CD14-positive monocyte (primary cell): ENCODE measurements at regions of chr12 and their contacts with region 1.

Region 1: DNA sequence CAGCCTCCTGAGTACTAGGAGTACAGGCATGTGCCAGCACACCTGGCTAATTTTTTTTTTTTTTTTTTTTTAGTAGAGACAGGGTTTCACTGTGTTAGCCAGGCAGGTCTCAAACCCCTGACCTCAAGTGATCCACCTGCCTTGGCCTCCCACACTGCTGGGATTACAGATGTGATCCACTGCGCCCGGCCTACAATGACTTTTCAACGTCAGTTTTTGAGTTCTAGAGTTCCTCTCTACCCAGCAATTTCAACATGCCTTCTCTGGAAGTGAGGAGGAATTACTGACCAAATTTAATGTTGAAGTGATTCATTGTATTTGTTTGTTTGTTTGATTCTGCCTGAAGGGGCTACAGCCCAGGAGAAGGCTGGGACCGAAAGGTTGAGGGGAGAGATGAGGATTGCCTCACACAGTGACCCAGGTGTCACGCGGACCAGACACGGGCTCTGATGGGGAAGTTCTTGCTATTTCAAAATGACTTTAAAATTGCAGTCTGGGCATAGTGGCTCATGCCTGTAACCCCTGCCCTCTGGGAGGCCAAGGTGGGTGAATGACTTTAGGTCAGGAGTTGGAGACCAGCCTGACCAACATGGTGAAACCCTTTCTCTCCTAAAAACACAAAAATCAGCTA is 8.6 kb upstream of the DENR start:
- DNase-seq: peak; percentile 92 to 95 (median 94)
- H3K4me3 ChIP-seq: no peak overlapping the region
- H3K4me3 Mint-ChIP-seq: peak overlapping the region in 1 of 2 donors; percentile 56
- H3K27ac ChIP-seq: peak overlapping the region; percentile 73 to 79
- H3K27ac Mint-ChIP-seq: peak overlapping the region; percentile 90 to 94 (median 92)
- H3K4me1 ChIP-seq: peaks cover 44 to 45% of the 10 kb centered on the region in 2 donors
- H3K4me1 Mint-ChIP-seq: peaks cover 28% of the 10 kb centered on the region
- H3K27me3 ChIP-seq: no peaks in the 10 kb centered on the region
- H3K27me3 Mint-ChIP-seq: peaks cover 0 to 2% (median 0%) of the 10 kb centered on the region in 3 donors
- CTCF ChIP-seq: no peak

Region 2: DNA sequence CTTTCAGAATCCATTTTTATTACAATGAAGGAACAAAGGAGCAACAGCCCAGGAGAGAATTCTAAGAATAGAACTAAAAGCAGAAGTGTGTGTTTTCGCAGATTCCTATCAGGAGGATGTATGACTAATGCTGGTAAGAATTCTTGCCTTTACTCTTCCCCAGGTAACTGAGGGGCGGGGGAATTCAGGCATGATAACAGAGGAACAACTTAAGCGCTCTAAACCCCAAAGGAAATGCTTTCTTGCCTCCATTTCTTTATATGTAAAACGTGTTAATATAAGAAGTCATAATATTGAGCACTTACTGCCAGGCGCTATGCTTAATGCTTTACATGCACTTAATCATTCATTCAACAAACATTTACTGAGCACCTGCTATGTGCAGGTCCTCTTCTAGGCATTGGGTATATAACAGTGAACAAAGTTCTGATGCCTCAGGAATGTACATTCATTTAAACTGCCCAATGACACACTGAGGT is 17.9 kb before region 1 on chr12:
- intact Hi-C with region 1: loop called in 1 of 2 experiments (anchors 2 kb)
- DNase-seq: peak; percentile 56 to 89 (median 87)
- H3K4me3 ChIP-seq: peak overlapping the region in 2 of 3 experiments; percentile 10 to 60
- H3K4me3 Mint-ChIP-seq: peak overlapping the region; percentile 54 to 85
- H3K27ac ChIP-seq: peak overlapping the region in 1 of 2 donors; percentile 79
- H3K27ac Mint-ChIP-seq: peak overlapping the region; percentile 89 to 97 (median 92)
- H3K4me1 ChIP-seq: peaks cover 43 to 49% of the 10 kb centered on the region in 2 donors
- H3K4me1 Mint-ChIP-seq: peaks cover 38% of the 10 kb centered on the region
- H3K27me3 ChIP-seq: peaks cover 0 to 5% of the 10 kb centered on the region in 2 donors
- H3K27me3 Mint-ChIP-seq: peaks cover 5 to 6% (median 6%) of the 10 kb centered on the region in 3 donors
- CTCF ChIP-seq: no peak